AG04450 (cell line): ENCODE measurements at regions of chr22 and their contacts with region 1.

Region 1: DNA sequence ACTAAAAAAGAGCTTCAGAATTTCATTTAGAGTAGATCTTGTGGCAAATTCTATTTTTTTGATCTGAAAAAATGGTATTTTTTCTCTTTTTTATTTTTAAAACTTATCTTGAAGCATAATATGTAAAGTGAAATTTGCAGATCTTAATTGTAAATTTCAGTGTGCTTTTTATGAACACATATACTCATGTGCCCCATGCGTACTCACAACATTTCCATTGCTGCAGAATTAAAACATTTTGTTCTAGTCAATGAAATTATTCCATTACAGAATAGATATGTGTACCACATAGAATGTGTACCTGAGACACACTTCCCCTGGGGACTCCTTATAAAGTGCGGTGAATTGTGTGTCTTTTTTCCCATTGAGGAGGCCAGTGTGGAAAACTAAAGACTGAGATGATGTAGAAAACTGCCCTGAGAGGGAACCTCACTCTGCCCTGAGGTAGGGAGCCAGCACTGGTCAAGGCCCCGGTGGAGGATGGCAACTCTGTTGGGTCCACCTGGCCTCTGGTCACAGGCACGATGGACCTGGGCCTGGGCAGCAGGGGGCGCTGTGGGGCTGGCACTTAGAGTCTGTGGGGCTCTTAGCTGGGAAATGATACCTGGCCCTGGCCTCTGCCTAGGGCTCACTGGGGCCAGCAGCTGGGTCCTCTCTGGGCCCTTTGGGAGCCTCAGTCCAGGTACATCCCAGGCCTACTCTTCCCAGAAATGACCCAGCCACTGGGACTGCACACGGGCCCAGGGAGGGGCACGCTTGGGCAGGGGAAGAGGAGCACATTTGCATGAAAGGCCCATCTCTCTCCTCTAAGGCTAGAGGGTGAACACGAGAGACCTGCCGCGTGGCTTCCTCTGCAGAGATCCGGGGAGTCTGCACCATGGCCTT is 77.9 kb upstream of the TOP3B start:
- DNase-seq: no peak
- H3K4me3 ChIP-seq: no peak overlapping the region
- H3K27ac ChIP-seq: no peak overlapping the region
- H3K27me3 ChIP-seq: peaks cover 28% of the 10 kb centered on the region
- CTCF ChIP-seq: peak; percentile 84

Region 2: GRCh38 chr22:22043296-22044078 is 17.0 kb before region 1 on chr22:
- CTCF ChIA-PET with region 1: interaction called, 38 read pairs
- POLR2A ChIA-PET with region 1: no interaction called
- DNase-seq: no peak
- H3K4me3 ChIP-seq: no peak overlapping the region
- H3K27ac ChIP-seq: no peak overlapping the region
- H3K27me3 ChIP-seq: peaks cover 22% of the 10 kb centered on the region
- CTCF ChIP-seq: no peak

Region 3: DNA sequence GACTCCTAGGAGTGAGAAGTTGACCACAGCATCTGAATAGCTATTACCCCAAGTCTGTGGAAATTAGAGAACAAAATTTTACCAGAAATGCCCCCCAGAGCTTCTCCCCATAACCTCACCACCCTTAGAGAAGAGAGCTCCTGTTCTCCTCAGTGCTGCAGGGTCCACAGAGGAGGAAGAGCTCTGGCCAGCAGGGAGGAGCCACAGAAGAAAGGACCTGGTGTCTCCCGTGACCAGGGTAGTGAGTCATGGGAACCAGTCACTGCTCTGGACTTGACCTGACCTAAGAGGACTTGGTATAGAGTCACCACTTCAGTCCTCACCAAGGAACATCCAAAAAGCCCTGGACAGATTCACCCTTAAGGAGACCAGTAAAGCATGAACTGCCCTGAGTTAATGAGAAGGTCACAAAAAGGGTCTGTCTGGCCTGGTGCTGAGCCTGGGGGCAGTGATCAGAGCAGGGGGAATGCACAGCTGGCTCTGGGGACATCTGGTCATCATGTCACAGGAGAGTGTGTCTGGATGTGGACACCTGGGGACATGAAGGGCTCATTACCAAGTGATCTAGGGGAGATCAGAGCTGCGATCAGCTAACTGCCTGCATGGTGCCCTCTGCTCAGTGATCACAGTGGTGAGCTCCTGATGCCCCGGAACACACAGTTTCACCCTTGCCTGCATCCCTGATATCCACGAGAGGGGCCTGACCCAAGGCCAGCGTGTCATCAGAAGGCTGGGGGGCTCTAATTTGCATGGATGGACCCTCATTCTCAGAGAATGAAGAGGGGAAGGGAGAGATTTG is 25.5 kb after region 1 on chr22:
- CTCF ChIA-PET with region 1: interaction called, 42 read pairs
- POLR2A ChIA-PET with region 1: no interaction called
- DNase-seq: no peak
- H3K4me3 ChIP-seq: no peak overlapping the region
- H3K27ac ChIP-seq: no peak overlapping the region
- H3K27me3 ChIP-seq: peaks cover 5% of the 10 kb centered on the region
- CTCF ChIP-seq: no peak

Region 4: GRCh38 chr22:22110548-22111266 is 50.3 kb after region 1 on chr22:
- CTCF ChIA-PET with region 1: interaction called, 16 read pairs
- POLR2A ChIA-PET with region 1: no interaction called
- DNase-seq: peak; percentile 26
- H3K4me3 ChIP-seq: no peak overlapping the region
- H3K27ac ChIP-seq: peak overlapping the region; percentile 96
- H3K27me3 ChIP-seq: no peaks in the 10 kb centered on the region
- CTCF ChIP-seq: peak; percentile 67

Region 5: GRCh38 chr22:22144858-22145257 is 84.4 kb after region 1 on chr22:
- CTCF ChIA-PET with region 1: interaction called, 31 read pairs
- POLR2A ChIA-PET with region 1: no interaction called
- DNase-seq: no peak
- H3K4me3 ChIP-seq: no peak overlapping the region
- H3K27ac ChIP-seq: no peak overlapping the region
- H3K27me3 ChIP-seq: peaks cover 27% of the 10 kb centered on the region
- CTCF ChIP-seq: peak; percentile 55

Region 6: GRCh38 chr22:22156716-22157347 is 96.4 kb after region 1 on chr22:
- CTCF ChIA-PET with region 1: interaction called, 15 read pairs
- POLR2A ChIA-PET with region 1: no interaction called
- DNase-seq: peak; percentile 33
- H3K4me3 ChIP-seq: no peak overlapping the region
- H3K27ac ChIP-seq: no peak overlapping the region
- H3K27me3 ChIP-seq: peaks cover 7% of the 10 kb centered on the region
- CTCF ChIP-seq: peak; percentile 76

Region 7: GRCh38 chr22:22207845-22208564 is 147.6 kb after region 1 on chr22:
- CTCF ChIA-PET with region 1: interaction called, 20 read pairs
- POLR2A ChIA-PET with region 1: no interaction called
- DNase-seq: peak; percentile 39
- H3K4me3 ChIP-seq: no peak overlapping the region
- H3K27ac ChIP-seq: no peak overlapping the region
- H3K27me3 ChIP-seq: peaks cover 10% of the 10 kb centered on the region
- CTCF ChIP-seq: peak; percentile 83